AG04449 (cell line): ENCODE measurements at regions of chr3 and their contacts with region 1.

Region 1: DNA sequence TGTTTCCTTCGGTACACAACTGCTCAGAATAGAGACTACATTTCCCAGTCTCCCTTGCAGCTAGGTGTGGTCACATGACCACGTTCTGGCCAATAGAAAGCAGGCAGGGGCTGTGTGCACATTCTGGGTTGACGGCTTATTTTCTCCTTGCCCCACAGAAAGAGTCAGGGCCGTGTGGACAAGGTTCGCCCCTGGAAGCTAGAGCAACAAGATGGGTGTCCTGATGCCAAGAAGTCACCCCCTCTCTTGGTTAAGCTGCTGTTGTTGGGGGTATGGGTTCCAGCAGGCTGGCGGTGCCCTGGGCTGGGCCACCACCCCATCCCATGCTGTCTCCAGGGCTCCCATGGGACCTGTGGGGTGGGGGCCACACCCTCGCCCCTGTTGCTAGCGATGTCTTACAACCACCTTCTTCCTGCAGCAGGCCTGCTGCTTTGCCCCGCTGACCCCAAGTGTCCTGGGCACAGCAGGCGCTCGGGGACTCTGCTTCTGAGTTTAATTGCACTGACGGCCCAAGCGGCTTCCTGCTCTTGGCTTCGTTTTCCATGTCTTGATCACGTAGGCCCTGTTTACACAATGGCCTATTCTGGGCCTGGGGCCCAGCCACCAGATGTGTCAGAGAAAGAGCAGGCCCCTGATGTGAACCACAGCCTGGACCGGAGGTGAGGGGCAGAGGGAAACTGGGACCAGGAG is 24.9 kb downstream of the ABTB1 start:
- DNase-seq: no peak
- H3K4me3 ChIP-seq: peak overlapping the region; percentile 21; the same call in 1 of the 2 replicates
- CTCF ChIP-seq: no peak

Region 2: DNA sequence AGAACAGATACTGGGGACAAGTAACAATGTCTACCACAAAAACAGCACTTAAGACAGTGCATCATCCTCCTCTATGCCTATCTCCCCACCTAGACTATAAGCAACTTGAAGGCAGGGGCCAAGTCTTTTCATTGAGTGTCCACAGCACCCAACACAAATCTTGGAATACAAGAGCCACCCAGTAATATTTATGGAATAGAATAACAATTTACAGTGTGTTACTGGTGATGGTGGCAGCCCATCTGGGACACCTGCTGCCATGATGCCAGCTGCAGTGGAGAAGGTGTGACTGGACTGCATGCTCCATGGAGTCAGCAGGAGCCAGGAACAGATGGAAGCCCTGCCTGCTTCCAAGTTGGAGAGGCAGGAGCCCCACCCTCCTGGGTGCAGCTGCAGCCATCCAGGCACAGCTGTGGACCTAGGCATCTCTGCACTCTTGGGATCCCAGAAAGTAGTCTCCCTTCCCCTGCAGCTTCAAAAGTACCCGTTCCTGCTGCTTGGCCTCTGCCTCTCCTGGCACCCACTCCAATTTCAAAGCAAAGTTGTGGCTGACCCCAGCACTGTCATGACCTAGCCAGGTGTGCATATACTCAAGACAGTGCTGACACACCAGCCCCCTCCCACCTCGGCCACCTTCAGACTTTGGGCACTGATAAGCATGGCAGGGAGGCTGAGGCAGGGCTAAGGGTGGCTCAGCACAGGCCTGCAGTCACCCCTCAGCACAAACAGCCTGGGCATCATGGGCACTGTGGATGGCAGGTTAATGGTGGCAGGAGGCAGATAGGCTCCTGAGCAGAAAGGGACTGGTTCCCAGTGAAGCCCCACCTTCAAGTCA is 201.7 kb before region 1 on chr3:
- CTCF ChIA-PET with region 1: no interaction called
- POLR2A ChIA-PET with region 1: no interaction called
- DNase-seq: no peak
- H3K4me3 ChIP-seq: no peak overlapping the region
- CTCF ChIP-seq: no peak

Region 3: GRCh38 chr3:127610105-127610504 is 87.6 kb before region 1 on chr3:
- CTCF ChIA-PET with region 1: no interaction called
- POLR2A ChIA-PET with region 1: no interaction called
- DNase-seq: no peak
- H3K4me3 ChIP-seq: no peak overlapping the region
- CTCF ChIP-seq: no peak

Region 4: DNA sequence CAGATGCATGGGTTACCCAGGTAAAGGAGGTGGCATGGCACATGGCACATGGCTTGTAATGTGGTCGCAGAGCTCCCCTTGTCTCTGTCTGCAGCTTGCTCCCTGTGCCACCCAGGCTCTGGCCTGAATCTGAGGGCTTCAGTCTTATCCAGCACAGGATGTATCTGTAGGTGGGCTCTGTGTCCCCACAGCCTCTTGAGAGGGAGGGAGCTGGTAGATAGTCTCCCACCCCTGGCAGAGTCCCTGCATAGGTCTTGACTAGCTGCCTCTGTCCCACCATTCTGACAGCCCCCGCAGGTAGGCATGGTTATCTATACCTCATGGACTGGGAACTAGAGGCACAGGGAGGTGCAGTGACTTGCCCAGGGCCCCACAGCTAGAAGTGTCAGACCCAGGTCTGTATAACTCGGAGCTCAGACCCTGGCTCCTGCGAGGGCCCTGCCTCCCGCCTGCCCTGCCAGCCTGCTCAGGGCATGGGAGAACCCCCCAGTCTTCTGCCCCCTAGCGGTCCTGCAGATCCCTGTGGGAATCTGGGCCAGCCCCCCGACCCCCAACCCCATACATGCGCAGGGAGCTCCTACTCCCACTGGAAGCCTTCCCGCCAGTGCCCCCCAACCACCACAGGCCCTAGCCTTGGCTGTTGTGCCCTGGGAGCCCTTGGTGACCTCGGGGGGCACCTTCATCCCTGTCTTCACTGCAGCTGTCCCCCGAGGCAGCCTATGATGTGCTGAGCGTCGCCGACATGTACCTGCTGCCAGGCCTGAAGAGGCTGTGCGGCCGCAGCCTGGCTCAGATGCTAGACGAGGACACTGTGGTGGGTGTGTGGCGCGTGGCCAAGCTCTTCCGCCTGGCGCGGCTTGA is 18.2 kb before region 1 on chr3:
- CTCF ChIA-PET with region 1: interaction called, 87 read pairs
- POLR2A ChIA-PET with region 1: no interaction called
- DNase-seq: no peak
- H3K4me3 ChIP-seq: no peak overlapping the region
- CTCF ChIP-seq: no peak

Region 5: GRCh38 chr3:127723011-127723567 is 25.4 kb after region 1 on chr3:
- CTCF ChIA-PET with region 1: interaction called, 20 read pairs
- POLR2A ChIA-PET with region 1: no interaction called
- DNase-seq: no peak
- H3K4me3 ChIP-seq: no peak overlapping the region; the same call in 1 of the 2 replicates
- CTCF ChIP-seq: no peak

Region 6: DNA sequence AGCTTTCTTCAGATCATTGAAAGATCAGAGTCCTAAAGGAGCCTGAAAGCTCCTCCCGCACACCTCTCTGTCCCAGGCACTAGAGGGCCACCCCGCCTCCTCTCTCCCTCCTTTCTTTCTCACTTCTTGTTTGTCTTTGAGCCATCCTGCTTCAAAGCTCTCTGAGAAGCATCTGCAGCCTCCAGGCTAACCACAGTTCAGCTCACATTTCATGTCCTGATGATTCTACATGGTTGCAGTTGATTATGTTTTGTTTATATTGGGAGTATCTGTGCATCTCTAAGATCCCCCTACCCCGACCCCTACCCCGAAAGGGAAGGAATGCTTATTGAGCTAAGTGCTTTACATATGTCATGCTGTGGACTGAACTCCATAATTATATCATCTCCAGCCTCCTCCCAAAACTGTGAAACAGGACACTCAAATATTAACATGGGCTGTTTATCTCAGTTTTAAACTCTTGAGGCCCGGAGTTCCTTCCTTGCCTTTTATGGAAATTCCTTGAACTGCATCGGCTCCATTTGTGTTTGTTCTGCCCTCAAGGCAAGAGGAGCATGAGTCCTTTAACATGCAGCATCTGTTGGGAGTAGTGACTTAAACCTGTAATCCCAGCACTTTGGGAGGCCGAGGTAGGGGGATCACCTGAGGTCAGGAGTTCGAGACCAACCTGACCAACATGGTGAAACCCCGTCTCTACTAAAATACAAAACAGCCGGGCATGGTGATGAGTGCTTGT is 93.7 kb after region 1 on chr3:
- CTCF ChIA-PET with region 1: interaction called, 10 read pairs
- POLR2A ChIA-PET with region 1: no interaction called
- DNase-seq: peak; percentile 42
- H3K4me3 ChIP-seq: no peak overlapping the region
- CTCF ChIP-seq: peak; percentile 47

Region 7: DNA sequence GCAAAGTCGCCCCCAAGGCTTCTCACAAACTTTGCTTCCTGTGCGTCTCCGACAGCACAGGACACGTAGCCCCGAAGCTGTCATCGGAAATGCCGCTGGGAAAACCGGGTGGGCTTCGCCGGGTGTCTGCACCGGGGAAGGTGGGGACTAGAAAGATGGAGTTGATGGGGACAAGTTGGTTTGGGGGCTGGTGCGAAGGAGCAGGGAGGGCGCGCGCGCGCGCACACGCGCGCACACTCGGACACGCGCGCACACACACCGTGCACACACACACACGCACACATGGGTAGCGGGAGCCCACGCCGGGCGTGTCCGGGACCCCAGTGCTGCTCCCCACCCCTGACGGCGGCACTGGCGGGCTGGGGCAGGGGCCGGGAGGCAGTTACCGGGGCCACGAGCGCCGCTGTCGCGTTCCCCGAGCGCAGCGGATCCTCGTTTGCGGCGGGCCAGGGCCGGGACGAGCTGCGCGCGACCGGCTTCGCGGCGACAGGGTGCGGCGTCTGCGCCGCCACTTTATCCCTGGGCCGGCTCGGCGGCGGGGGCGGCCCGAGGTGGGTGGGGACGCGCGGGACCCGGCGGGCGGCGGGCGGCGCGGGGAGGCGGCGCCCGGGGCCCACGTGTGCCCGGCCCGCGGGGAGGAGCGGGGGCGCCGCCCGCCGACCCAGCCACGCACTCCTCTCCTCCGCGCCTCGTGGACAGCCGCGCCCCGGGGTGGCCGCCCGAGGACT is 125.2 kb after region 1 on chr3:
- CTCF ChIA-PET with region 1: interaction called, 18 read pairs
- POLR2A ChIA-PET with region 1: interaction called, 7 read pairs
- DNase-seq: no peak
- H3K4me3 ChIP-seq: peak overlapping the region; percentile 77
- CTCF ChIP-seq: peak; percentile 33

Region 8: DNA sequence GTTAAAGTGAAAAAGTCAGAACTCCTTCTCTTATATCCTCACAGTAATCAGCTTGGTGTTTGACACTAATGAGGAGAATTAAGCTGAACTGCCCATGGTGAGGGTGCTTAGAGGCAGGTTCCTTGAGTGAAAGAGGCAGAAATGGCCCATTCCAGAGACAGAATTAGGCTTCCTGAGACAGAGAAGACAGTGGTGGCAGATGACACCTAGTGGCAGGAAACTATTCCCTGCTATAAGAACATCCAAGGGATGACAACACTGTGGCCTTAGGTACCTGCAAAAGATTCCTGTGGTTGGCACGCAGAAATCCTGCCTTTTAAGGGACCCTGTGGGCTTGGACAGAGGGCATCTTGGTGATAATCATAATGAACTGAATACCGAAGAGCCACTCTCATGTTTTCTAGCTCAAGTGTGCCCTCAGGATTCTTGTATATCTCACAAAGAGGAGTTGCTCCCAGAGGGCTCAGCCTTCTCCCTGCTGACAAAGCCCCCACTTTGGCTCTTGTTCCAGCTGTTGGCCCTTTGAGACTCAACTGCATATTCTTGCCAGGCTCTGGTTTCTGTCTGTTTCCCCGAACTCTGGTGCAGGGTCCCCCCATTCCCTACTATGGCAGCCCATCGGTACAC is 273.4 kb after region 1 on chr3:
- CTCF ChIA-PET with region 1: interaction called, 13 read pairs
- POLR2A ChIA-PET with region 1: no interaction called
- DNase-seq: no peak
- H3K4me3 ChIP-seq: no peak overlapping the region
- CTCF ChIP-seq: peak; percentile 73